ENCODE measurements at regions of chr2 and their contacts with region 1.

Region 1: GRCh38 chr2:134411828-134412638 is 158.2 kb downstream of the MGAT5 start:
- H3K4me3 ChIP-seq: no peak overlapping the region
- H3K27ac ChIP-seq: no peak overlapping the region
- H3K4me1 ChIP-seq: peaks cover 13% of the 10 kb centered on the region
- CTCF ChIP-seq: peak; percentile 83

Region 2: GRCh38 chr2:133886735-133887660 is 525.0 kb before region 1 on chr2:
- CTCF ChIA-PET with region 1: interaction called, 14 read pairs
- POLR2A ChIA-PET with region 1: no interaction called
- H3K4me3 ChIP-seq: no peak overlapping the region
- H3K27ac ChIP-seq: no peak overlapping the region
- H3K4me1 ChIP-seq: no peaks in the 10 kb centered on the region; the same call in 1 of the 2 replicates
- CTCF ChIP-seq: peak; percentile 43; the same call in 1 of the 2 replicates

Region 3: GRCh38 chr2:134118279-134119116 is 293.5 kb before region 1 on chr2:
- CTCF ChIA-PET with region 1: interaction called, 69 read pairs
- POLR2A ChIA-PET with region 1: interaction called, 14 read pairs
- H3K4me3 ChIP-seq: no peak overlapping the region
- H3K27ac ChIP-seq: no peak overlapping the region
- H3K4me1 ChIP-seq: peaks cover 13% of the 10 kb centered on the region
- CTCF ChIP-seq: peak; percentile 40; the same call in 1 of the 2 replicates

Region 4: DNA sequence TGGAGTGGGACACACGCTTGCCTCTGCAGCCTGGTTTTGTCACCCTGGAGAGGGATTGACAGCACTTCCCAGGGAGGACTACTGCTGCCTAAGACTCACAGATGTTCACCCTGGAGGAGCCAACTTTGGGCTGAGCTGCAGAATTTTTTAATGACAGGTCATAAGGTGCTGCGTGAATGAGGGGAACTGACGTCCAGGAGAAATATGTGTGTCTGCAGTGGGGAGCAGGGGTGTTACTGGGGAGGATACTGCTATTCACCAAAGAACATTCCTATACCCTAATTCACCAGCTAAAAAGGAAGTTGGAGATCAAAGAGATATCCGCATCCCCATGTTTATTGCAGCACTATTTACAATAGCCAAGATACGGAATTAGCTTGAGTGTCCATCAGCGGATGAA is 13.7 kb before region 1 on chr2:
- CTCF ChIA-PET with region 1: interaction called, 13 read pairs
- POLR2A ChIA-PET with region 1: no interaction called
- H3K4me3 ChIP-seq: no peak overlapping the region
- H3K27ac ChIP-seq: no peak overlapping the region
- H3K4me1 ChIP-seq: no peaks in the 10 kb centered on the region
- CTCF ChIP-seq: no peak

Measured in HEK293 (cell line).